ENCODE measurements at regions of chr2 and their contacts with region 1.

Region 1: DNA sequence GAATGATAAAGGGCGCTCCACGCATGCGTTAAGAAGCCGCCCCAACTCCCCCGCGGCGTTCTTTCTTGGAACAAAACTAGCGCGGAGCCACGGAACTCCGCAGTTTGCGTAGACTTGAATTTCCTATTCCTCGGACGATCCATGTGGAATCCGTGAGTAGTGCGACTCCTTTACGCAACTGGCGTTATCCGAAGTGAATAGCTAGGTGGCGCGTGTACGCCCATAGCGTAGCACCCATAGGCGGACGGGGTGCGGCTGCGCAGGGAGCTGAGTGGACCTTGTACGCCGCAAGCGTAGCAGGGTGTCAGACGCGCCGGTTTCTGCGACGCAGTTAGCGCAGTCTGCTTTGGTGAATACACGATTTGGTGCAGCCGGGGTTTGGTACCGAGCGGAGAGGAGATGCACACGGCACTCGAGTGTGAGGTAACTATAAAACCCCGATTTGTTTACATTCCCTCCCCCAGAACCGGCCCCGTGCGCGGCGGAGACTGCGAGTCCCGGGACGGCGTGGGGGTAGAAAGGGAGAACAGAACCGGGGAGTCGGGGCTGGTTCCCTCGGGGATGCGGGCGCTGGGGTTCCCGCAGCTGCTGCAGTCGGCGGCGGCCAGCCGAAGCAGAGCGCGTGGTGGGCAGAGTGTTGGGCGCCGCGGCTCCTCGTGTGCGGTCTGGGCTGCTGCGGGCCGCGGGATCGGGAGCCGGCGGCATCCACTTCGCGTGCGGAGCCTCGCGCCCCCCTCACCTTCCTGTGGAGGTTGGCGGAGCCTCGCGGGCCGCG is at the start of gene SLC39A10:
- DNase-seq: peak; percentile 99
- H3K4me3 Mint-ChIP-seq: peak within 1 kb of the TSS; percentile 97
- H3K27ac Mint-ChIP-seq: peak within 1 kb of the TSS; percentile 98
- H3K4me1 Mint-ChIP-seq: peaks cover 21% of the 10 kb centered on the region
- H3K27me3 Mint-ChIP-seq: no peaks in the 10 kb centered on the region
- total RNA-seq, gene SLC39A10: 43.2 to 47.0 TPM

Region 2: GRCh38 chr2:195257979-195258378 is 399.1 kb before region 1 on chr2:
- CTCF ChIA-PET with region 1: no interaction called
- POLR2A ChIA-PET with region 1: no interaction called
- DNase-seq: no peak
- H3K4me3 Mint-ChIP-seq: no peak overlapping the region
- H3K27ac Mint-ChIP-seq: no peak overlapping the region
- H3K4me1 Mint-ChIP-seq: no peaks in the 10 kb centered on the region
- H3K27me3 Mint-ChIP-seq: no peaks in the 10 kb centered on the region

Region 3: DNA sequence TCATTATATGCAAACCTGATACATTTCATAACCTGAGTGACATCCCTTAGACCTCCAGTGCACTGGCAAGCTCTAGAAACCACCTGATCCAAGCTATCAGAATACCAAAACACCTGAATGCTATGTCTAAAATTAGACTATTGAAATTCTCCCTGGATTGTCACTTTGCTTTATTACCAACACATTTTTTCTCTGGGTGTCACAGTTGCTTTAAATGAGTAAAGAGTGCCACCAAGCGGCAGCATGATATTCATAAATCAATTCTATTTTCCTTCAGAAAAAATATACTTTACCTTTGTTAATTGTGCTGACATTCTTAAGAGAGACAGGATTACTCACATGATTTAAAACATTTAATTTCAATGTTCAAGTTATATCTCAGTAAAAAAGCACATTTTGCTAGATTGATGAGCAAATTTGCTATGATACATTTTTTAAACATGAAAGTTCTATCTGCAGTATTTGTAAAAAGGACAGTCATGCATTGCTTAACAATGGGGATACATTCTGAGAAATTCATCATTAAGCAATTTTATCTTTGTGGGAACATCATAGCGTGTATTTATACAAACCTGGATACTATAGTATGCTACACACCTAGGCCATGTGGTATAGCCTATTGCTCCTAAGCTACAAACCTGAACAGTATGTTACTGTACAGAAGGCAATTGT is 338.5 kb before region 1 on chr2:
- CTCF ChIA-PET with region 1: interaction called, 38 read pairs
- POLR2A ChIA-PET with region 1: interaction called, 16 read pairs
- DNase-seq: peak; percentile 44
- H3K4me3 Mint-ChIP-seq: no peak overlapping the region
- H3K27ac Mint-ChIP-seq: no peak overlapping the region
- H3K4me1 Mint-ChIP-seq: peaks cover 15% of the 10 kb centered on the region
- H3K27me3 Mint-ChIP-seq: no peaks in the 10 kb centered on the region

Region 4: GRCh38 chr2:195498176-195498575 is 158.9 kb before region 1 on chr2:
- CTCF ChIA-PET with region 1: interaction called, 37 read pairs
- POLR2A ChIA-PET with region 1: interaction called, 27 read pairs
- DNase-seq: peak; percentile 55
- H3K4me3 Mint-ChIP-seq: no peak overlapping the region
- H3K27ac Mint-ChIP-seq: no peak overlapping the region
- H3K4me1 Mint-ChIP-seq: peaks cover 25% of the 10 kb centered on the region
- H3K27me3 Mint-ChIP-seq: no peaks in the 10 kb centered on the region

Region 5: GRCh38 chr2:195509551-195509950 is 147.5 kb before region 1 on chr2:
- CTCF ChIA-PET with region 1: no interaction called
- POLR2A ChIA-PET with region 1: no interaction called
- DNase-seq: no peak
- H3K4me3 Mint-ChIP-seq: no peak overlapping the region
- H3K27ac Mint-ChIP-seq: no peak overlapping the region
- H3K4me1 Mint-ChIP-seq: peaks cover 8% of the 10 kb centered on the region
- H3K27me3 Mint-ChIP-seq: no peaks in the 10 kb centered on the region

Region 6: DNA sequence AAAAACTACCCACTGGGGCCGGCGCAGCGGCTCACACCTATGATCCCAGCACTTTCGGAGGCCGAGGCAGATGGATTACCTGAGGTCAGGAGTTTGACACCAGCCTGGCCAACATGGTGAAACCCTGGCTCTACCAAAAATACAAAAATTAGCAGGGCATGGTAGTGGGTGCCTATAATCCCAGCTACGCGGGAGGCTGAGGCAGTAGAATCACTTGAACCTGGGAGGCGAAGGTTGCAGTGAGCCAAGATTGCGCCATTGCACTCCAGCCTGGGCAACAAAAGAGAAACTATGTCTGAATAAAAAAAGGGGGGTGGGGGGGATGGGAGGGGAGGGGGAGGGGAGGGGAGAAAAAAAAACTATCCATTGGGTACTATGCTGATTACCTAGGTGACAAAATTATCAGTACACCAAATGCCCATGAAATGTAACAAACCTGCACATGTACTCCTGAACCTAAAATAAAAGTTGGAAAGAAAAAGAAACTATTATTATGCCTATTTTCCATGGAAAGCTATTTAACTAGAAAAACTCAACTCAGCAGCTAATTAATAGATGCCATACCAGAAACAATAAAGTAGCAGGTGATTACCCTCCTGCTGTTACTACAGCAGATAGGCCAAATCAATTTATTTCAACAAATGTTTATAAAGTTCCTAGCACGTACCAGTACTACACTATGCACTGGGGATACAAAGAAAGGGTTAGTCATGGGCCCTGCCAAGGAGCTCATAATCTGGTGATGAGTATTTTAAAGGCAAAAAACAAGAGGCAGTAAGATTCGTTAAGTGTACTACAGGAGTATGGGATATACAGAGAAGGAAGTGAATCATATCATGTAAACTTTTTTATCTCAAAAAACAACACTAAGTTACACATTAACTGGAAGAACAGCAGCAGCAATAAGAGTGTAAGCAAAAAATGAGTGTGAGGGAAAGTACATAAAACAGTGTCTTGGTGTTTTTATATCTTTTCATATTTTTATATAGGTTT is 112.8 kb before region 1 on chr2:
- CTCF ChIA-PET with region 1: interaction called, 10 read pairs
- POLR2A ChIA-PET with region 1: interaction called, 408 read pairs
- DNase-seq: no peak
- H3K4me3 Mint-ChIP-seq: peak overlapping the region; percentile 6
- H3K27ac Mint-ChIP-seq: peak overlapping the region; percentile 87
- H3K4me1 Mint-ChIP-seq: peaks cover 75% of the 10 kb centered on the region
- H3K27me3 Mint-ChIP-seq: no peaks in the 10 kb centered on the region

Region 7: DNA sequence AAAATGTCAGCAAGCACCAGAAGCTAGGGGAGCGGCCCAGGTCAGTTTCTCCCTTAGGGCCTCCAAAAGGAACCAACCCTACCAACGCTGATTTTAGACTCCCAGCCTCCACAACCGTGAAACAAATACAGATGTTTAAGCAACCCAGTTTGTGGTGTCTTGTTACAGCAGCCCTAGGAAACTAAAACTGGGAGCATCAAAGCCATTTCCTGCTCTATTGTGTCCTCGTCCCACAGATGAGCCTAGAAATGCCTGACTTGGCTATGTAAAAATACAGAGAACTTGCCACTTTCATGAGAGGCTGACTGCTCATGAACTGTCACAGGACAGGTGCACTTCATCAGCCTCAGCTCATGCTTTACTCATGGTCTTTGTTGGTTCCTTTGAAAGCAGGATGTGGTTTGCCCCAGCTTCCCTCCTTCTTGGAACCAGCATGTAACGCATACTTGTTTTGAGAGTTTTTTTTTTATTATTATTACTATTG is 97.6 kb before region 1 on chr2:
- CTCF ChIA-PET with region 1: interaction called, 73 read pairs
- POLR2A ChIA-PET with region 1: interaction called, 323 read pairs
- DNase-seq: peak; percentile 91
- H3K4me3 Mint-ChIP-seq: peak overlapping the region; percentile 74
- H3K27ac Mint-ChIP-seq: peak overlapping the region; percentile 99
- H3K4me1 Mint-ChIP-seq: peaks cover 71% of the 10 kb centered on the region
- H3K27me3 Mint-ChIP-seq: no peaks in the 10 kb centered on the region

Region 8: GRCh38 chr2:195722075-195722474 is 65.0 kb after region 1 on chr2:
- CTCF ChIA-PET with region 1: no interaction called
- POLR2A ChIA-PET with region 1: no interaction called
- DNase-seq: no peak
- H3K4me3 Mint-ChIP-seq: no peak overlapping the region
- H3K27ac Mint-ChIP-seq: no peak overlapping the region
- H3K4me1 Mint-ChIP-seq: peaks cover 4% of the 10 kb centered on the region
- H3K27me3 Mint-ChIP-seq: no peaks in the 10 kb centered on the region

Region 9: DNA sequence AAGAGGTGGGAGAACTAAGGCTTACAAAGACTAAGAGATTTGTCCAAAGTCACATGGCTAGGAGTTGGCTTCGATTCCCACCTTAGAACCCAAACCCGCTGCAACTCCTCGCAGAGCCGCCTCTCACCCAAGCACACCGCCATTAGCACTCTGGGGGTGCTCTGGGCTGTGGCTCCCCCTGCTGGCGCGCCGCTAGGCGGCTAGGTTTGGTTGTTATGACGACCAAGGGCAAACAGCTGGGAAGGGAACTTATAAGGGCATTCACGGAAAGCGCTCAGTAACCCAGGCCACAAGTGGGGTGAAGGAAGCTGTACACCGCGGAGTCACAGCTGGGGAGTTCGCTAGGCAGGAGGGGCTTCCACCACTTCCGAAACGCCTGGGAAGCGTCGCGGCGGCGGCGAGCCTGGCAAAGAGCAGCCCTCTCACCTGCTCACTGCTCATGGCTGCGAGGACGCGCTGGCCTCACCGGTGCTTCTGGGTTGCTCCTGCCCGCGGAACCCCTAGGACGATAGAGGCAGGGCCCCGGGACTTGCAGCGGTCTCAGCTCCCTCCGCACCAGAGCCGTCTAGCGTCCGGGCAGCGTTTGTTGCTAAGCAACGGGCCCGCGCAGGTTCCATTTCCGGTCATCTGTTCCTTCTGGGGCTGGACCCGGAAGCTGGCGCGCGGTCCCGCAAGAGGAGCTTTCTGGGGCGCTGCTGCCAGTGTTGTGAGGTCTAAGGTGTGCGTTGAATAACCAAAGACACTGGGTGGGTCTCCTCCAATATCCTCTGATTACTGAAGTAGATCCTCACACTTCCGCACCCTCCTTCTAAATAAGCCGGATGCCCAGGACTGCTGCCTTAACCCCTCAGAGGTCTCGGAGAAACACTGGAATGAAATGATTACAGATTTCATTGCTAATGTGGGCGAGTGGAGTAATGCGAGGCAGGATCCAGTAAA is 411.5 kb after region 1 on chr2 and contains the start of gene DNAH7:
- CTCF ChIA-PET with region 1: interaction called, 19 read pairs
- POLR2A ChIA-PET with region 1: interaction called, 3 read pairs
- DNase-seq: peak; percentile 94
- H3K4me3 Mint-ChIP-seq: peak within 1 kb of the TSS; percentile 78
- H3K27ac Mint-ChIP-seq: peak within 1 kb of the TSS; percentile 38
- H3K4me1 Mint-ChIP-seq: peaks cover 12% of the 10 kb centered on the region
- H3K27me3 Mint-ChIP-seq: peaks cover 17% of the 10 kb centered on the region
- total RNA-seq, gene DNAH7: not detected

Measured in activated CD4-positive, alpha-beta memory T cell treated with anti-CD3 and anti-CD28 coated beads, Interleukin-2, amount 10 ng/mL, durations not matched to agents 7 days and 5 days (primary cell).